BJ (cell line): ENCODE measurements at regions of chr5 and their contacts with region 1.

Region 1: GRCh38 chr5:176415952-176416924 is at the start of gene CLTB:
- DNase-seq: no peak
- H3K4me3 ChIP-seq: peak within 1 kb of the TSS; percentile 84
- H3K27me3 ChIP-seq: no peaks in the 10 kb centered on the region
- CTCF ChIP-seq: 0 out of 2 replicates have a peak, but pooled peaks have one; percentile 16
- polyA plus RNA-seq, gene CLTB: 122 and 141 TPM in 2 replicates

Region 2: DNA sequence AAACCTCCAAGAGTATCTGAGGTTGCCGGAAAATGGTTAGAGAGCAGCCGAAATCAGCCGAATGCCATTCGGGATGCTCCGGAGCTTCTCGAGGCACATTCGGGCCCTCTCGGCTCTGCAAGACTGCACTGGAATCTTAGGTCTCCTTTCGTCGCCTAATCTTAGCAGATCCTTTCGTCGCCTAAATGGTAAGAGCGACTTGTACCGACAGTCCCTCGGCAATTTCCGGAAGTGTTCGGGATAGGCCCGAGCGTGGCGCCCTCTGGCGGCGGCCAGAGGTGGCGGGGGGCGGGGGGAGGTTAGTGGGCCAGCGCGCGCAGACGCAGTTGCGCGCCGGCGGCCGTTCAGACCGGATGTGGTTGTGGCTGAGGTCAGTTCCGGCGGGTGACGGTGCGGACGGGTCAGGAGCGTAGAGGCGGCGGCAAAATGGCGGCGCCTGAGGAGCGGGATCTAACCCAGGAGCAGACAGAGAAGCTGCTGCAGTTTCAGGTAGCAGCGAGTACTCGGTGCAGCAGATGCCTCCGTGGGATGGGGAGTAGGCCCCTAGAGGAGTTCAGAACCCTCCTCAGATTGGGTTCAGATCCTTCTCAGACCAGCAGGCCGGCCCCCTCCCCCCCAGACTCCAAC is 31.9 kb after region 1 on chr5 and contains the start of gene FAF2:
- CTCF ChIA-PET with region 1: interaction called, 25 read pairs
- POLR2A ChIA-PET with region 1: interaction called, 4 read pairs
- DNase-seq: peak; percentile 98
- H3K4me3 ChIP-seq: peak within 1 kb of the TSS; percentile 100
- H3K27me3 ChIP-seq: no peaks in the 10 kb centered on the region
- CTCF ChIP-seq: peak; percentile 90
- polyA plus RNA-seq, gene FAF2: 36.9 and 52.2 TPM in 2 replicates

Region 3: GRCh38 chr5:176536902-176537607 is 120.8 kb after region 1 on chr5 and contains the start of gene RNF44:
- CTCF ChIA-PET with region 1: interaction called, 10 read pairs
- POLR2A ChIA-PET with region 1: interaction called, 6 read pairs
- DNase-seq: peak; percentile 86
- H3K4me3 ChIP-seq: peak within 1 kb of the TSS; percentile 86
- H3K27me3 ChIP-seq: no peaks in the 10 kb centered on the region
- CTCF ChIP-seq: no peak
- polyA plus RNA-seq, gene RNF44: 3.1 and 6.0 TPM in 2 replicates

Region 4: DNA sequence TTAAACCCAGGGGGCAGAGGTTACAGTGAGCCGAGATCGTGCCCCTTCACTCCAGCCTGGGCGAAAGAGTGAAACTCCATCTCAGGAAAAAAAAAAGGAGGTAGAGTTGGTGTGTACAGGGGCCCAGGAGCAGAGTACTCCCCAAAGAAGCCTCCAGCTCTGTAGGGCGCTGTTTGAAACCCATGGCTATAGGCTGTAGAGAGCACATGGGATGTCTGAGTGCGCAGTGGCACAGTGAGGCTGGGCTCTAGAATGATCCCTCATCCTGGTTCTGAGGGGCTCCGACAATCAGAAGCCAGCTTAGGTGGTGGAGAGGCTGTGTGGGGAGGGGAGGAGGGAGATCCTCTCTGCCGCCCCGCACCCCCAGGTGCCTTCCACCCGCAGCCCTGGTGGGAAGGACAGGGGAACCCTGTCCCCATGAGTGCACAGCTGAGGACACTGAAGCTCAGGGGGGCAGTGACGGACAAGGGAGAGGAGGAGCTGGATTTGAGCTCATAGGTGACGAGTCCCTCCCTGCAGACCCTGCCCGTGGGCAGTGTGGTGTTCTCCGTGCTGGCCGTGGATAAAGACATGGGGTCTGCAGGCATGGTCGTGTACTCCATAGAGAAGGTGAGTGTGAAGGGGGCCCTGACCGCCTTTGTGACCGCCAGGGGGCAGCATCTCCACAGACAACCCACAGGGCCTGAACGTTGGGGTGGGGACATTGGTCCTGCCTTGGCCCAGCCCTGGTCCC is 157.5 kb after region 1 on chr5:
- CTCF ChIA-PET with region 1: interaction called, 18 read pairs
- POLR2A ChIA-PET with region 1: no interaction called
- DNase-seq: no peak
- H3K4me3 ChIP-seq: no peak overlapping the region
- H3K27me3 ChIP-seq: no peaks in the 10 kb centered on the region
- CTCF ChIP-seq: peak; percentile 86

Region 5: DNA sequence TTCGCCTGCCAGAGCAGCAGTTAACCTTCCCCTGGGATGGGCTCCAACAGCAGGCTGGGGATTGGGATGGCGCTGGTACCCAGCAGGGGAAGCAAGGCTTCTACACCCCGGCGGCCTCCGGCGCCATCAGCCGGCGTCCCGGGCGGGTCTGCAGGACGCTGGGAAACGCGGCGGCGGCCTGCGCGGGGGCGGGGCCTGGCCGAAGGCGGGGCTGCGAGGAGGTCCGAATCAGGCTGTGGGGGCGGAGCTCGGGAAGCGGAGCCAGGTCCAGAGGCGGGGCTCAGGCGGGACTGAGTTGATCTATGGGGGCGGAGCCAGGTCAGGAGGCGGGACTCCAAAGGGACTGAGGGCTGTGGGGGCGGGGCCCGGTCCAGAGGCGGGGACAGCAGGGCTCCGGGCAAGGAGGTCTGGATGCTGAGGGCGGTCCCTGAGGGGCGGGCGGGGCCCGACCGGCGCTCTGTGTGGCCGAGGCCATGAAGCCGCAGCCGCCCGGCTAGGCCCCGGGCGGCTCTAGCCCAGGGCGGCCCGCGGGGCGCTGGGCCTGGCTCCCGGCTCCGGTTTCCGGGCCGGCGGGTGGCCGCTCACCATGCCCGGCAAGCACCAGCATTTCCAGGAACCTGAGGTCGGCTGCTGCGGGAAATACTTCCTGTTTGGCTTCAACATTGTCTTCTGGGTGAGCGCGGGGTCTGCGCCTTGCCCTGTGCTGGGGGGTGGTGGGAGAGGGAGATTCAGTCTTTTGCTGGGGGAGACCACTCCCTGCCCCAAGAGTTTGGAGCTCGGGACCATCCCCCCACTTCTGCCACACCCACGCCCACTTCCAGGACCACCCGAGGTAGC is 231.0 kb after region 1 on chr5 and contains the start of gene TSPAN17:
- CTCF ChIA-PET with region 1: no interaction called
- POLR2A ChIA-PET with region 1: no interaction called
- DNase-seq: peak; percentile 93
- H3K4me3 ChIP-seq: peak within 1 kb of the TSS; percentile 68
- H3K27me3 ChIP-seq: no peaks in the 10 kb centered on the region
- CTCF ChIP-seq: peak; percentile 33
- polyA plus RNA-seq, gene TSPAN17: 50.4 and 65.8 TPM in 2 replicates

Region 6: DNA sequence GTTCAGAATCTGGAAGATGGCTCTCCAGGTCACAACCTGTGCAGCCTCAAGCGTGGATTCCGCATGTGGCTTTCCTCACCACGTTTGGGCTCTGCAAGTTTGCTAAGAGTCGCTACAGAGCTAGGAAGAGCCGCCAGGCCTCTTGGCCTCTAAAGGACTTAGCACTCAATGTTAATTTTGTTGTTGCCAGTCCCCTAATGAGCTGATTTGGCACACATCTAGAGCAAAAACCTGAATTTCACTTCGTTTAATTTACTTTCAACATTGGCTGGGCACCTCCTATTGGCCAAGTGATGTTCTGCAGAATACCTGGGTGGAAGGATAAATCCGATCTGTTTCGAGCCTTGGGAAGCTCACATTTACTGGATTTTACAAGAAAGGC is 328.3 kb after region 1 on chr5:
- CTCF ChIA-PET with region 1: no interaction called
- POLR2A ChIA-PET with region 1: no interaction called
- DNase-seq: no peak
- H3K4me3 ChIP-seq: no peak overlapping the region
- H3K27me3 ChIP-seq: peaks cover 35% of the 10 kb centered on the region
- CTCF ChIP-seq: no peak